GM12878 (cell line): ENCODE measurements at regions of chr16 and their contacts with region 1.

Region 1: GRCh38 chr16:23302045-23302956 is at the start of gene SCNN1B:
- DNase-seq: no peak
- ATAC-seq: peak; percentile 82
- H3K4me3 ChIP-seq: peak within 1 kb of the TSS; percentile 41; the same call in 1 of the 2 replicates
- H3K27ac ChIP-seq: no peak within 1 kb of the TSS
- H3K4me1 ChIP-seq: peaks cover 5% of the 10 kb centered on the region; the same call in 1 of the 2 replicates
- H3K27me3 ChIP-seq: peaks cover 2 to 3% of the 10 kb centered on the region in 2 experiments; a peak in 2 of 4 replicates
- CTCF ChIP-seq: peak in 2 of 3 experiments; percentile 12 to 16; a peak in 2 of 6 replicates
- EP300 ChIP-seq: no peak
- POLR2A ChIP-seq: no peak
- RAD21 ChIP-seq: no peak
- polyA plus RNA-seq, gene SCNN1B: 0.99 to 1.3 TPM

Region 2: GRCh38 chr16:23339787-23340186 is 37.5 kb after region 1 on chr16:
- CTCF ChIA-PET with region 1: interaction called, 9 read pairs
- POLR2A ChIA-PET with region 1: interaction called, 3 read pairs
- RAD21 ChIA-PET with region 1: interaction called, 30 read pairs
- SMC1A ChIA-PET with region 1: interaction called, 12 read pairs
- in situ Hi-C with region 1: no loop called
- intact Hi-C with region 1: no loop called
- DNase-seq: no peak
- ATAC-seq: no peak
- H3K4me3 ChIP-seq: no peak overlapping the region
- H3K27ac ChIP-seq: no peak overlapping the region
- H3K4me1 ChIP-seq: peaks cover 20% of the 10 kb centered on the region
- H3K27me3 ChIP-seq: no peaks in the 10 kb centered on the region
- CTCF ChIP-seq: no peak
- EP300 ChIP-seq: no peak
- POLR2A ChIP-seq: no peak
- RAD21 ChIP-seq: no peak